Keratinocyte (primary cell): ENCODE measurements at regions of chr11 and their contacts with region 1.

Region 1: GRCh38 chr11:69115586-69116560 is 39.9 kb upstream of the SMIM38 start:
- DNase-seq: no peak
- H3K4me3 ChIP-seq: no peak overlapping the region
- H3K27ac ChIP-seq: no peak overlapping the region
- H3K4me1 ChIP-seq: peaks cover under 1% of the 10 kb centered on the region
- H3K27me3 ChIP-seq: peaks cover 31% of the 10 kb centered on the region
- CTCF ChIP-seq: no peak

Region 2: GRCh38 chr11:69048718-69049489 is 67.0 kb before region 1 on chr11 and contains the start of gene TPCN2:
- dilution Hi-C with region 1: no loop called
- DNase-seq: peak; percentile 92
- H3K4me3 ChIP-seq: peak within 1 kb of the TSS; percentile 82 to 94 (median 83)
- H3K27ac ChIP-seq: peak within 1 kb of the TSS; percentile 71
- H3K4me1 ChIP-seq: peaks cover 24% of the 10 kb centered on the region
- H3K27me3 ChIP-seq: no peaks in the 10 kb centered on the region
- CTCF ChIP-seq: no peak
- polyA plus RNA-seq, gene TPCN2: 7.7 to 12.0 TPM (median 10.0 TPM) in 3 replicates

Region 3: GRCh38 chr11:69218271-69218682 is 102.4 kb after region 1 on chr11:
- dilution Hi-C with region 1: no loop called
- DNase-seq: no peak
- H3K4me3 ChIP-seq: no peak overlapping the region
- H3K27ac ChIP-seq: no peak overlapping the region
- H3K4me1 ChIP-seq: peaks cover 10% of the 10 kb centered on the region
- H3K27me3 ChIP-seq: peaks cover 4% of the 10 kb centered on the region
- CTCF ChIP-seq: no peak

Region 4: DNA sequence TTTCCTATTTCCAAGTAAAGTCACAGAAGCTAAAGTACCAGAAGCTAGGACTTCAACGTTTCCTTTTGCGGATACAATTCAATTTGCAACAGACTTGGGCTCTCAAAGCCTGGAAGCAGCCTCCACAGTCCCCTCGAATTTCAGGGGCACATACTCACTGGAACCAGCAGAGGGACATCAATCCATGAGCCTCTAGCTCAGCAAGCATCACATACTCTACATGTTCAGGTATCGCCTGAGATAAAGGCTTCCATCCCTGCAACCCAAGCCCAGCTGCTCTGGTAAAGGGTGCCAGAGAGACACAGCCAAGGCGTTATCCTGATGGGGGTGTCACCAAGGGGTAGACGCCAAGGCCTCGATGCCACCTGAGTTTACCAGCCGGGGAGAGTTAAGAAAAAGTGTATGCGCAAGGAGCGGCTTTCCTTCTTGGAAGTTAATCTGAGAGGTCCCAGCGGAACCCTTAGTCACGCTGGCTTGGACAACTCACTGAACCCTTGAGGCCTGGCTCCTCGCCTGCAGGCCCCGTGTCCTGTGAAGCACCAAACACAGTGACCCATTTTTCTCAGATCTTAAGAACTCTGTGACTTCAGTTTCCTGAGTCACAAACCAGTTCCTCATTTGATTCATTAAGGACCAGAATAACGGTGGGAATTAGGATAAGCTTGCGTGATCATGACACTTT is 546.3 kb after region 1 on chr11:
- dilution Hi-C with region 1: loop called (anchors 10 kb)
- DNase-seq: no peak
- H3K4me3 ChIP-seq: no peak overlapping the region
- H3K27ac ChIP-seq: no peak overlapping the region
- H3K4me1 ChIP-seq: no peaks in the 10 kb centered on the region
- H3K27me3 ChIP-seq: no peaks in the 10 kb centered on the region
- CTCF ChIP-seq: peak in 2 of 3 experiments; percentile 23 to 36